ENCODE measurements at regions of chr2 and their contacts with region 1.

Region 1: DNA sequence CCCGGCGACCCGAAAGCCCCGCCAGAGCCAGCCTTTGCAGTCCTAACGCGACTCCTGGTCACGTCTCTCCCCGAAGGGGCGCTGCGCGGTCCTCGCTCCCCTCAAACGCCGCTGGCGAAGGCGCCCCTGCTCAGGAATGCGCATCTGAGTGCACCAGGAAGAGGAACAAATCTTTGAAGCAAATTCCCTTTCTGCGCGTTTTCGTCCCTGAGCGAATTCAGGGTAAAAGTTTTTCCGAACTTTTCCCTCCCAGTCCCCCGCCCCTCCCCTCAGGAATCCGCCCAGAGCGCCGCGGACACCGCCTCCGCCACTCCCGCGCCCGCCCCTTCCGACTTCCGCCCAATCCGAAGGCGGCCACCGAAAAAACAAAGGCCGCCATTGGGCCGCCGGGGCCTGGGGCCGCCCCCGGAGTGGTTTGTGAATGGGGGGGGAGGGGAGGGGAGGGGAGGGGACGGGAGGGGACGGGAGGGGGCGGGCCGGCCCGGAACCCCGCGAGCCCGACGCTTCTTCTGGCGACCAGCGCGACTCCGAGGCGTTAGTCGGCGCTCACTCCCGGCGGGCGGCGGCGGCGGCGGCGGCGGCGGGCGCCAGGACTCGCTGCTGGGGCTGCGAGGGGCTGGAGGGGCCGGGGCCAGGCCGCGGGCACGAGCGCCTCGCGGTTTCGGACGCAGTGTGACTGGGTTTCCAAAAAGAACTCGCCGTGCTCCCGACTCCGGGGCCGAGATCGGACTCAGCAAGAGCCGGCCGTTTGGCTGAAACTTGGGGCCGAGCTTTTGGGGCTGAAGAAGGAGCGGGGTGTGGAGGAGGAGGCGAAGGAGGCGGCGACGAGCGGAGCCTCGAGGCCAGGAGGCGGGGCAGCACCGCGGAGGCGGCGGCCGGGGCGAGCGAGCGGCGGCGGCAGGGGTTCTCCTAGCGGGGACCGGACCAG is at the start of gene FZD7:
- DNase-seq: peak; percentile 90
- H3K4me3 ChIP-seq: peak within 1 kb of the TSS; percentile 63 to 79 (median 71)
- H3K27ac ChIP-seq: peak within 1 kb of the TSS; percentile 80
- H3K4me1 ChIP-seq: peaks cover 32% of the 10 kb centered on the region
- H3K27me3 ChIP-seq: no peaks in the 10 kb centered on the region
- CTCF ChIP-seq: peak in 1 of 2 donors; percentile 37
- total RNA-seq, gene FZD7: 21.6 to 66.5 TPM

Region 2: GRCh38 chr2:201780674-201781581 is 252.7 kb before region 1 on chr2 and contains the start of gene ALS2:
- CTCF ChIA-PET with region 1: no interaction called
- dilution Hi-C with region 1: no loop called
- in situ Hi-C with region 1: no loop called
- intact Hi-C with region 1: loop called (anchors 5 kb)
- DNase-seq: peak; percentile 99
- H3K4me3 ChIP-seq: peak within 1 kb of the TSS; percentile 73 to 95 (median 85)
- H3K27ac ChIP-seq: peak within 1 kb of the TSS; percentile 93
- H3K4me1 ChIP-seq: peaks cover 22% of the 10 kb centered on the region
- H3K27me3 ChIP-seq: no peaks in the 10 kb centered on the region
- CTCF ChIP-seq: no peak
- total RNA-seq, gene ALS2: 46.2 to 53.3 TPM

Region 3: DNA sequence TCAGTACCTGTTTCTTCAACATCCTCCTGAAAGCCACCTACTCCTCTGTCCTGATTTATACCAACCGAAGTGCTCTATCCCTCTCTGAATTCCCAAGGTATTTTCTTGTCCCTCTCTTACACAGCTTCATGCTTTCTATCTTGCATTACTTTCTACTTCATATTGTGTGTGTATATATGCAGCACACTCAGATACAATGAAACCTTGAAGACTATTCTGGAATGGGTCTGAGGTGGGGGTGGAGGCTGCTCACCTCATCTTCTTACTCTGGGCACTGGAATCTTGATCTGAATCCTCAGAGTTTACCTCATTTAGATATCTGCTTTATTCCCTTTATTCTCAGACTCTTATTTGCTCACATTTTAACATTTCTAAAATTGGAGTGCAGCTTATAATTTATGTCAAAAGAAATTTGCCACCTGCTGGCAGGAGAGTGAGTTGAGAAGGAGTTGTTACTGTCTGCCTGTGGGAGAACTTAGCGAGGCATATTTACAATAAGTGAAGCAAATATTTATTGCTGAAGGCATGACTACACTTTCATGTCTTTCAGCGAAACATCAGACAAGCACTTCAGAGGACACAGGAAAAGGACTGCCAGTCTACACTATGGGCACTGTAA is 22.9 kb after region 1 on chr2:
- CTCF ChIA-PET with region 1: no interaction called
- dilution Hi-C with region 1: no loop called
- in situ Hi-C with region 1: no loop called
- intact Hi-C with region 1: loop called (anchors 1 kb)
- DNase-seq: no peak
- H3K4me3 ChIP-seq: no peak overlapping the region
- H3K27ac ChIP-seq: no peak overlapping the region
- H3K4me1 ChIP-seq: no peaks in the 10 kb centered on the region
- H3K27me3 ChIP-seq: peaks cover 3% of the 10 kb centered on the region
- CTCF ChIP-seq: peak; percentile 22 to 47